ENCODE measurements at regions of chr11 and their contacts with region 1.

Region 1: GRCh38 chr11:12281571-12282478 is 95.5 kb upstream of the PARVA start:
- DNase-seq: peak; percentile 83
- H3K4me3 ChIP-seq: no peak overlapping the region
- H3K27ac ChIP-seq: no peak overlapping the region
- H3K4me1 ChIP-seq: peaks cover 11% of the 10 kb centered on the region
- H3K27me3 ChIP-seq: no peaks in the 10 kb centered on the region
- CTCF ChIP-seq: peak; percentile 97

Region 2: GRCh38 chr11:11931461-11932055 is 350.3 kb before region 1 on chr11:
- intact Hi-C with region 1: loop called (anchors 10 kb)
- DNase-seq: no peak
- H3K4me3 ChIP-seq: no peak overlapping the region
- H3K27ac ChIP-seq: no peak overlapping the region
- H3K4me1 ChIP-seq: peaks cover 17% of the 10 kb centered on the region
- H3K27me3 ChIP-seq: no peaks in the 10 kb centered on the region
- CTCF ChIP-seq: peak; percentile 76

Region 3: GRCh38 chr11:12043959-12044819 is 237.6 kb before region 1 on chr11:
- intact Hi-C with region 1: loop called (anchors 5 kb)
- DNase-seq: peak; percentile 72
- H3K4me3 ChIP-seq: peak overlapping the region; percentile 22
- H3K27ac ChIP-seq: peak overlapping the region; percentile 78
- H3K4me1 ChIP-seq: peaks cover 24% of the 10 kb centered on the region
- H3K27me3 ChIP-seq: no peaks in the 10 kb centered on the region
- CTCF ChIP-seq: peak; percentile 94

Region 4: GRCh38 chr11:12216671-12217374 is 65.0 kb before region 1 on chr11:
- intact Hi-C with region 1: no loop called
- DNase-seq: peak; percentile 35
- H3K4me3 ChIP-seq: no peak overlapping the region
- H3K27ac ChIP-seq: peak overlapping the region; percentile 62
- H3K4me1 ChIP-seq: peaks cover 56% of the 10 kb centered on the region
- H3K27me3 ChIP-seq: no peaks in the 10 kb centered on the region
- CTCF ChIP-seq: no peak

Region 5: GRCh38 chr11:12430955-12431354 is 149.1 kb after region 1 on chr11:
- intact Hi-C with region 1: no loop called
- DNase-seq: no peak
- H3K4me3 ChIP-seq: peak overlapping the region; percentile 2
- H3K27ac ChIP-seq: peak overlapping the region; percentile 71
- H3K4me1 ChIP-seq: peaks cover 66% of the 10 kb centered on the region
- H3K27me3 ChIP-seq: no peaks in the 10 kb centered on the region
- CTCF ChIP-seq: no peak